T-cell (primary cell): ENCODE measurements at regions of chr1 and their contacts with region 1.

Region 1: DNA sequence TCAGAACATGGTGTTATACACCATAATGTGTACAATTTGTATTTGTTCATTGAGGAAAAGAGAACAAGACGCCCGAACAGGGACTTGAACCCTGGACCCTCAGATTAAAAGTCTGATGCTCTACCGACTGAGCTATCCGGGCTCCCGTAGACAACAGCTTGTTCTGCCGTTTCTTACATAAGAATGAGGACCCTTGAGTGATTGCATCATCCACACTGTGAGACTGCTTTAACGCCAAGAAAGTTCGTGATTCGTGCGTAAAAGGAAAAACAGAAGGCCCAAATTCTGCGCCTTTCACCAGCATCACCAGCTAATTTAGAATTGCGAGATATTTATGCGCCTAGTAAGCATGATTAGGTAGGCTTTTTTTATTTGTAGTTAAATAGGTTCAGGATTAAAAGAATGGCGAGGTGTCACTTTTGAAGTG is 9.2 kb upstream of the MDM4 start:
- DNase-seq: peak; percentile 64 to 97 (median 82)
- ATAC-seq: peak; percentile 77 to 84 (median 80)
- H3K4me3 ChIP-seq: peak overlapping the region; percentile 56 to 74
- H3K4me3 Mint-ChIP-seq: peak overlapping the region; percentile 82 to 87 (median 86)
- H3K27ac ChIP-seq: peak overlapping the region; percentile 95
- H3K27ac Mint-ChIP-seq: peak overlapping the region; percentile 98 to 99
- H3K4me1 ChIP-seq: peaks cover 7 to 12% of the 10 kb centered on the region in 2 experiments
- H3K4me1 Mint-ChIP-seq: peaks cover 40 to 49% (median 41%) of the 10 kb centered on the region in 3 donors
- H3K27me3 ChIP-seq: no peaks in the 10 kb centered on the region
- H3K27me3 Mint-ChIP-seq: peaks cover 0 to 4% of the 10 kb centered on the region in 2 donors

Region 2: GRCh38 chr1:204431310-204432165 is 75.4 kb before region 1 on chr1:
- CTCF ChIA-PET with region 1: interaction called, 10 to 34 read pairs
- POLR2A ChIA-PET with region 1: interaction called in 1 of 2 experiments, 3 read pairs
- DNase-seq: peak; percentile 31 to 90 (median 71)
- ATAC-seq: peak; percentile 76 to 86 (median 78)
- H3K4me3 ChIP-seq: no peak overlapping the region
- H3K4me3 Mint-ChIP-seq: no peak overlapping the region
- H3K27ac ChIP-seq: no peak overlapping the region
- H3K27ac Mint-ChIP-seq: peak overlapping the region in 1 of 2 donors; percentile 12
- H3K4me1 ChIP-seq: no peaks in the 10 kb centered on the region
- H3K4me1 Mint-ChIP-seq: peaks cover 2 to 8% (median 6%) of the 10 kb centered on the region in 3 donors
- H3K27me3 ChIP-seq: no peaks in the 10 kb centered on the region
- H3K27me3 Mint-ChIP-seq: no peaks in the 10 kb centered on the region

Region 3: DNA sequence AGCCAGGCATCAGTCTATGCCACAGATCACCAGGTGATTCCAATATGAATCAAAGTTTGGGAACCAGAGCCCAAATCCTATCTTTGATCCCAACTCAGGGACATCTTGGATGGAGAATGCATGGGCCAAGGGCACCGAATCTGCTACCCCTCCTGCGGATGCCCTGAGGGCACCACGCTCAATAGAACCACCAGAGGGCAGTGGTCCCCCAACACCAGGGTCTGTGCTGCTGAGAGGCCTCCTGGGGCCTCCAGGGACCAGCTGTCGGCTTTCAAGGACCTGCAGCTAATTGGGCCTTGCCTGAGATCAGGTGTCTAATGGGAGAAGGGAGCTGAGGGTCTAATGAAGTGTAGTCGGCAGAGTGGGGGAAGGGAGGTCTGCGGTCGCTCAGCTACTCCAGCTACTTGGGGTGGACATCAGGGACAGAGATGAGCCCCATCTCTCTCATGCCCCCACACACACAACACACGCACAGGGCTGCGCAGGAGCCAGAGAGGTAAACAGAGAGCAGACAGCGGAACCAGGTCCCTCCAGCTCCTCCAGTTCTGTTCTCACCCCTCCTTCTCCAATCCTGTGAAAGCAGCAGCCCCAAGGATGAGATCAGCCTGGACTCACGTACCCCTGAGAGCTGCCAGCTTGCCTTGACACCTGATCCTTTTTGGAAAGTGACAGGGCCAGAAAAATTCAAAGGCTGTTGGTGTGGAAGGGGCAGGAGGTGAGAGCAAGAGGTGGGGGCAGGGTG is 60.4 kb before region 1 on chr1:
- CTCF ChIA-PET with region 1: interaction called, 62 to 67 read pairs
- POLR2A ChIA-PET with region 1: interaction called, 3 to 9 read pairs
- DNase-seq: peak; percentile 60 to 87 (median 75)
- ATAC-seq: peak; percentile 86 to 98 (median 94)
- H3K4me3 ChIP-seq: no peak overlapping the region
- H3K4me3 Mint-ChIP-seq: no peak overlapping the region
- H3K27ac ChIP-seq: no peak overlapping the region
- H3K27ac Mint-ChIP-seq: peak overlapping the region; percentile 74 to 82
- H3K4me1 ChIP-seq: peaks cover 7 to 27% of the 10 kb centered on the region in 2 experiments
- H3K4me1 Mint-ChIP-seq: peaks cover 18 to 37% (median 20%) of the 10 kb centered on the region in 3 donors
- H3K27me3 ChIP-seq: no peaks in the 10 kb centered on the region
- H3K27me3 Mint-ChIP-seq: no peaks in the 10 kb centered on the region

Region 4: DNA sequence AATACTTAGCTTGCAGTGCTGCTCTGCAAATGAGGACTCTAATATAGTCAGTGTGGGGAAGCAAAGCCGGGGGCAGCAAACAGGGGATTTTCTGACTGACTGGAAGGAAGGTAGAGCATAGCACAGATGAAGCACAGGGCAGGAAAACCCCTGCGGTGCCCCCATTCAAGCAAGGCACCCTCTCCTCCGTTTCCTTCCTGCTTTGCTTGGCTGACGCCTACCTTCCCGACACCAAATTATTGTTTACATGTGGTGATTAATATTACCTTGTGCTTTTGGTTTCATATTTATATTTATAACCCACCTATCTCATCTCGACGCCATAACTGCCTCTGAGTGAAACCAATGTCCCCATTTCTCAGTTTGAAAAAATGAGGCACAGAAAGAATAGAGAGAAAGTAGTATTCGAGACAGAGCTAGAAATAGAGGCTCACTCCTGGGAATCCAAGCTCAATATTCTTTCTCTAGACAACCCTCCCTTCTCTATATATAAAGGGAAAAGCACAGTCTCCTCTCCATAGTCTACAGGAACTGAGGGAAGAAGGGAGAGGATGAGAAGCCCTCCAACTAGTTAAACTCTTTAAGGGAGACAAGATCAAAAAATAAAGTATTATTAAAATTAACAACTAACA is 53.7 kb before region 1 on chr1:
- CTCF ChIA-PET with region 1: interaction called, 62 to 67 read pairs
- POLR2A ChIA-PET with region 1: interaction called in 1 of 2 experiments, 4 read pairs
- DNase-seq: peak; percentile 19 to 92 (median 82)
- ATAC-seq: peak; percentile 92 to 99 (median 94)
- H3K4me3 ChIP-seq: no peak overlapping the region
- H3K4me3 Mint-ChIP-seq: peak overlapping the region; percentile 59 to 63 (median 60)
- H3K27ac ChIP-seq: peak overlapping the region; percentile 91
- H3K27ac Mint-ChIP-seq: peak overlapping the region; percentile 95 to 97
- H3K4me1 ChIP-seq: peaks cover 14 to 46% of the 10 kb centered on the region in 2 experiments
- H3K4me1 Mint-ChIP-seq: peaks cover 32 to 48% (median 35%) of the 10 kb centered on the region in 3 donors
- H3K27me3 ChIP-seq: no peaks in the 10 kb centered on the region
- H3K27me3 Mint-ChIP-seq: no peaks in the 10 kb centered on the region

Region 5: GRCh38 chr1:204494281-204495077 is 12.5 kb before region 1 on chr1 and contains the start of gene PIK3C2B:
- CTCF ChIA-PET with region 1: interaction called, 7 to 23 read pairs
- POLR2A ChIA-PET with region 1: interaction called, 3 to 4 read pairs
- DNase-seq: peak; percentile 42 to 79 (median 60)
- ATAC-seq: peak; percentile 71 to 82 (median 78)
- H3K4me3 ChIP-seq: peak within 1 kb of the TSS; percentile 78 to 92
- H3K4me3 Mint-ChIP-seq: peak within 1 kb of the TSS; percentile 89 to 95 (median 91)
- H3K27ac ChIP-seq: peak within 1 kb of the TSS; percentile 74
- H3K27ac Mint-ChIP-seq: peak within 1 kb of the TSS; percentile 96
- H3K4me1 ChIP-seq: peaks cover 31 to 43% of the 10 kb centered on the region in 2 experiments
- H3K4me1 Mint-ChIP-seq: peaks cover 54 to 78% (median 66%) of the 10 kb centered on the region in 3 donors
- H3K27me3 ChIP-seq: no peaks in the 10 kb centered on the region
- H3K27me3 Mint-ChIP-seq: no peaks in the 10 kb centered on the region
- total RNA-seq, gene PIK3C2B: 33.4 to 44.1 (median 36.0) TPM

Region 6: GRCh38 chr1:204565617-204566582 is 58.9 kb after region 1 on chr1:
- CTCF ChIA-PET with region 1: interaction called, 3 to 10 read pairs
- POLR2A ChIA-PET with region 1: no interaction called
- DNase-seq: peak in 34 of 35 experiments; percentile 29 to 81 (median 54)
- ATAC-seq: peak; percentile 79 to 90 (median 84)
- H3K4me3 ChIP-seq: no peak overlapping the region
- H3K4me3 Mint-ChIP-seq: peak overlapping the region in 1 of 3 donors; percentile 26
- H3K27ac ChIP-seq: peak overlapping the region; percentile 11
- H3K27ac Mint-ChIP-seq: peak overlapping the region; percentile 70 to 81
- H3K4me1 ChIP-seq: peaks cover 7 to 41% of the 10 kb centered on the region in 2 experiments
- H3K4me1 Mint-ChIP-seq: peaks cover 49 to 62% (median 52%) of the 10 kb centered on the region in 3 donors
- H3K27me3 ChIP-seq: no peaks in the 10 kb centered on the region
- H3K27me3 Mint-ChIP-seq: no peaks in the 10 kb centered on the region

Region 7: GRCh38 chr1:204924013-204924967 is 417.3 kb after region 1 on chr1:
- CTCF ChIA-PET with region 1: no interaction called
- POLR2A ChIA-PET with region 1: no interaction called
- DNase-seq: no peak
- ATAC-seq: no peak
- H3K4me3 ChIP-seq: no peak overlapping the region
- H3K4me3 Mint-ChIP-seq: no peak overlapping the region
- H3K27ac ChIP-seq: no peak overlapping the region
- H3K27ac Mint-ChIP-seq: no peak overlapping the region
- H3K4me1 ChIP-seq: no peaks in the 10 kb centered on the region
- H3K4me1 Mint-ChIP-seq: no peaks in the 10 kb centered on the region
- H3K27me3 ChIP-seq: peaks cover 0 to 26% of the 10 kb centered on the region in 2 experiments
- H3K27me3 Mint-ChIP-seq: peaks cover 11 to 20% of the 10 kb centered on the region in 2 donors